CD4-positive, alpha-beta T cell (primary cell): ENCODE measurements at regions of chr17 and their contacts with region 1.

Region 1: DNA sequence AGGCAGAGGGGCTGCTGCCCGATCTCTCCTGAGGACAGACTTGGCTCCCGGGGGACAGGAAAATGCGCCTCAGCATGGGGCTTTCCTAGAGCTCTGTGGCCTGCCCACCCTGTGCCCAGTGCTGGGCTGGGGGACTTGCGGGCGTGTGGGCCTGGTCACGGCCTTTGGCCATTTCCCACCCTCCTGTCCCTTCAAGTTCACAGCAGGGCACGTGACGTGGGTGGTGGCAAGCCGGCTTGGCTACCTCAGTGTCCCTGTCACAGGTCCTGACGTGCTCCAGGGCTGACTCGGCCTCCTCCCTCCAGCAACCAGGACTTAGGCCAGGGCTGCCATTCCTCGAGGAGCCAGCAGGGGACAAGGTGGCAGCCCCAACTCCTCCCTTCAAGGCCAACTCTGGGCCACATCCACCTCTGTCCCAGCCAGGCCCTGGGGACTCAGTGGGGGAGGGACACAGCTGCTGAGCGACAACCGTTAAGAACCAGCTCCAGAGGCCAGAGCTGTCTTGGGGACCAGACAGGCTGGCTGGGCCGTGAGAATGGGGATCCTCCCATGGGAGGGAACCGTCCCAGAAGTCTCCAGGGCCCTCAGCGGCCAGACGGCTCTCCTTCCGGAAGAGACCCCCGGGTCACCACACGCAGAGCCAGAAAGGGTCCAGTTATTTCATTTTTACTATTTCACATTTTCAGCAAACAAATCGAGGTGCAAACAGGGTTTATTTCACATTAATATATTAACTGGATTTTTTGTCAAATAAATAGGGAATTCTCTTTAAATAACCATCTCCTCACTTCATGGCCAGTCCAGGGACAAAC is 1.1 kb upstream of the UNC13D start:
- DNase-seq: peak in 13 of 14 experiments; percentile 40 to 84 (median 55)
- ATAC-seq: peak; percentile 54
- H3K4me3 ChIP-seq: peak overlapping the region; percentile 81
- H3K4me3 Mint-ChIP-seq: peak overlapping the region; percentile 81
- H3K27ac ChIP-seq: peak overlapping the region; percentile 94 to 95
- H3K27ac Mint-ChIP-seq: peak overlapping the region; percentile 76
- H3K4me1 ChIP-seq: peaks cover 66% of the 10 kb centered on the region
- H3K4me1 Mint-ChIP-seq: peaks cover 26% of the 10 kb centered on the region
- H3K27me3 ChIP-seq: no peaks in the 10 kb centered on the region
- H3K27me3 Mint-ChIP-seq: no peaks in the 10 kb centered on the region
- CTCF ChIP-seq: peak; percentile 55

Region 2: DNA sequence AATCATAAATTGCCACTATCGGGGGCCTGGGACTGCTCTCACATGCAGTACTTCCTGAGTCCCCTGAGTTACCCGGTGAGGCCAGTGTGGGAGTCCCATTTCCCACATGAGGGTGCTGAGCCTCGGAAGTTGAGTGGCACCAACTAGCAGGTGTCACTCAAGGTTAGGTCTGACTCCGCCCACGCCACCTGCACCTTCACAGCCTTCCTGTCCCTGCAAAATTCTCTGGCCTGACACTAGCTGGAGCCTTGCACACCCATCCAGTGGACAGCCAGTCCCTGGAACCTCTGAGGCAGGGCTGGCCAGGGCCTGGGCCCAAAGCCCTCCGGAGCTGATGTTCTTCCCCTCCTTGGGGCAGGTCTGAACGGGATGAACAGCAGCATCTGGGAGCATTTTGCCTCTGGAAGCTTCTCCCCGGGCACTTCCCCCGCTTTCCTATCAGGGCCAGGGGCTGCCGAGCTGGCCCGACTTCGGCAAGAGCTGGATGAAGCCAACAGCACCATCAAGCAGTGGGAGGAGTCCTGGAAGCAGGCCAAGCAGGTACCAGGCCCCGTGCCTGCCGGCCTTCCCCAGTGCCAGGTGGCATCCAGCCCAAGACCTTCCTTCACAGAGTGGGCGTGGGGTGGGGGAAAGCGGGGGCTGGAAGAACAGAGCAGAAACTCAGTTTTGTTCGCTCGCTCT is 23.0 kb before region 1 on chr17:
- CTCF ChIA-PET with region 1: no interaction called
- POLR2A ChIA-PET with region 1: interaction called, 14 read pairs
- intact Hi-C with region 1: no loop called
- DNase-seq: peak in 11 of 14 experiments; percentile 11 to 71 (median 45)
- ATAC-seq: peak; percentile 94
- H3K4me3 ChIP-seq: no peak overlapping the region
- H3K4me3 Mint-ChIP-seq: no peak overlapping the region
- H3K27ac ChIP-seq: peak overlapping the region; percentile 37 to 41
- H3K27ac Mint-ChIP-seq: peak overlapping the region; percentile 84
- H3K4me1 ChIP-seq: peaks cover 31% of the 10 kb centered on the region
- H3K4me1 Mint-ChIP-seq: peaks cover 17% of the 10 kb centered on the region
- H3K27me3 ChIP-seq: no peaks in the 10 kb centered on the region
- H3K27me3 Mint-ChIP-seq: no peaks in the 10 kb centered on the region
- CTCF ChIP-seq: no peak

Region 3: GRCh38 chr17:75827252-75828115 is 17.8 kb before region 1 on chr17:
- CTCF ChIA-PET with region 1: interaction called, 6 read pairs
- POLR2A ChIA-PET with region 1: interaction called, 29 read pairs
- intact Hi-C with region 1: no loop called
- DNase-seq: peak; percentile 30 to 85 (median 61)
- ATAC-seq: peak; percentile 76
- H3K4me3 ChIP-seq: peak overlapping the region; percentile 32
- H3K4me3 Mint-ChIP-seq: peak overlapping the region; percentile 34
- H3K27ac ChIP-seq: peak overlapping the region; percentile 39 to 46
- H3K27ac Mint-ChIP-seq: peak overlapping the region; percentile 86
- H3K4me1 ChIP-seq: peaks cover 46% of the 10 kb centered on the region
- H3K4me1 Mint-ChIP-seq: peaks cover 17% of the 10 kb centered on the region
- H3K27me3 ChIP-seq: no peaks in the 10 kb centered on the region
- H3K27me3 Mint-ChIP-seq: no peaks in the 10 kb centered on the region
- CTCF ChIP-seq: peak; percentile 84

Region 4: GRCh38 chr17:76072148-76072858 is 227.0 kb after region 1 on chr17 and contains the start of gene SRP68:
- CTCF ChIA-PET with region 1: no interaction called
- POLR2A ChIA-PET with region 1: no interaction called
- intact Hi-C with region 1: no loop called
- DNase-seq: peak; percentile 66 to 92 (median 82)
- ATAC-seq: peak; percentile 79
- H3K4me3 ChIP-seq: peak within 1 kb of the TSS; percentile 99
- H3K4me3 Mint-ChIP-seq: peak within 1 kb of the TSS; percentile 95
- H3K27ac ChIP-seq: peak within 1 kb of the TSS; percentile 70 to 82
- H3K27ac Mint-ChIP-seq: peak within 1 kb of the TSS; percentile 91
- H3K4me1 ChIP-seq: peaks cover 64% of the 10 kb centered on the region
- H3K4me1 Mint-ChIP-seq: peaks cover 49% of the 10 kb centered on the region
- H3K27me3 ChIP-seq: peaks cover 29 to 32% of the 10 kb centered on the region in 2 experiments
- H3K27me3 Mint-ChIP-seq: peaks cover 35% of the 10 kb centered on the region
- CTCF ChIP-seq: no peak
- total RNA-seq, gene SRP68: 106 to 108 TPM